ENCODE measurements at regions of chr3 and their contacts with region 1.

Region 1: DNA sequence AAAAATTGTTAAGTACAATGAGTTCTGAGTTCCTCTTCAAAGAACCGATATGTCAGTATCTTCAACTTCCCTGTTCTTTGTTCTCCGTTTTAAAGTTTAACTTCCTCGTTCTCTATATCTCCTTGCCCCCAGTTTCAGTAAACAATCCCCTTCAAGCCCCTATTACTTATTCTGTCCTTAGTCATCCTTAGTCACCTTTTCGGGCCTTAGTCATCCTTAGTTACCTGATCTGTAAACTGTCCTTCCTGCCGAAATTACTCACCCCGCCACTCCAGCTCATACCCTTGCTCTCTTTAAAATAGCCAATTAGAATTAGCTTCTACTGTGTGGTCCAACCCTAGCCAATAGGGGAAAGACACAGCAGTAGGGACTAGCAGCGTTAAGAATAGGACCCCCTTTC is 1165.6 kb downstream of the NSUN3 start:
- DNase-seq: no peak
- ATAC-seq: no peak
- H3K4me3 ChIP-seq: no peak overlapping the region
- H3K4me3 Mint-ChIP-seq: no peak overlapping the region
- H3K27ac ChIP-seq: no peak overlapping the region
- H3K27ac Mint-ChIP-seq: no peak overlapping the region
- H3K4me1 ChIP-seq: no peaks in the 10 kb centered on the region
- H3K4me1 Mint-ChIP-seq: no peaks in the 10 kb centered on the region
- H3K27me3 ChIP-seq: no peaks in the 10 kb centered on the region
- H3K27me3 Mint-ChIP-seq: no peaks in the 10 kb centered on the region
- CTCF ChIP-seq: no peak

Region 2: DNA sequence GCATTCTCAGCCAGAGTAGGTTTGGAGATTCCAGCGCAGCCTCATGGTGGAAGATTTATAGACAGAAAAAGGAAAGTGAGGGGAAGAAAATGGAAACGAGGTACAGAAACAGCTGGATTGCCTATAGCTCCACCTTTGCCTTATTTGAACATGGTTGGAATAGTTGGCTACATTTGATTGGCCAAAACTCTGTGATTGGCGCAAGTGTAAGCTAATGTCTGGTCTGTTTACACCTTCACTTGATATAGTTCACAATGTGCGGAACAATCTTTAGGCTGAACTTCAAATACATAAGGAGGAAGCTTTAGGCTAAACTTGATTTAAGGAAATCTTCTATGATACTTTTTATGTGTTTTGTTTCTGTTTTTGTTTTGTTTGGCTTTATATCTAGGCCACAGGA is 26.4 kb after region 1 on chr3:
- CTCF ChIA-PET with region 1: no interaction called
- POLR2A ChIA-PET with region 1: no interaction called
- intact Hi-C with region 1: loop called in 1 of 2 experiments (anchors 1 kb)
- DNase-seq: no peak
- ATAC-seq: no peak
- H3K4me3 ChIP-seq: no peak overlapping the region
- H3K4me3 Mint-ChIP-seq: no peak overlapping the region
- H3K27ac ChIP-seq: no peak overlapping the region
- H3K27ac Mint-ChIP-seq: no peak overlapping the region
- H3K4me1 ChIP-seq: no peaks in the 10 kb centered on the region
- H3K4me1 Mint-ChIP-seq: no peaks in the 10 kb centered on the region
- H3K27me3 ChIP-seq: no peaks in the 10 kb centered on the region
- H3K27me3 Mint-ChIP-seq: no peaks in the 10 kb centered on the region
- CTCF ChIP-seq: no peak

Measured in CD8-positive, alpha-beta T cell (primary cell).